Natural killer cell (primary cell): ENCODE measurements at regions of chr16 and their contacts with region 1.

Region 1: GRCh38 chr16:79601931-79602627 is 1.5 kb upstream of the MAF start:
- DNase-seq: peak; percentile 75 to 92
- ATAC-seq: no peak
- H3K4me3 ChIP-seq: peak overlapping the region; percentile 69
- H3K4me3 Mint-ChIP-seq: peak overlapping the region; percentile 99
- H3K27ac ChIP-seq: no peak overlapping the region
- H3K27ac Mint-ChIP-seq: peak overlapping the region; percentile 89 to 96
- H3K4me1 ChIP-seq: peaks cover 23% of the 10 kb centered on the region
- H3K4me1 Mint-ChIP-seq: peaks cover 27 to 31% of the 10 kb centered on the region in 2 donors
- H3K27me3 ChIP-seq: no peaks in the 10 kb centered on the region
- H3K27me3 Mint-ChIP-seq: peaks cover 0 to 19% of the 10 kb centered on the region in 2 donors
- CTCF ChIP-seq: peak; percentile 88

Region 2: DNA sequence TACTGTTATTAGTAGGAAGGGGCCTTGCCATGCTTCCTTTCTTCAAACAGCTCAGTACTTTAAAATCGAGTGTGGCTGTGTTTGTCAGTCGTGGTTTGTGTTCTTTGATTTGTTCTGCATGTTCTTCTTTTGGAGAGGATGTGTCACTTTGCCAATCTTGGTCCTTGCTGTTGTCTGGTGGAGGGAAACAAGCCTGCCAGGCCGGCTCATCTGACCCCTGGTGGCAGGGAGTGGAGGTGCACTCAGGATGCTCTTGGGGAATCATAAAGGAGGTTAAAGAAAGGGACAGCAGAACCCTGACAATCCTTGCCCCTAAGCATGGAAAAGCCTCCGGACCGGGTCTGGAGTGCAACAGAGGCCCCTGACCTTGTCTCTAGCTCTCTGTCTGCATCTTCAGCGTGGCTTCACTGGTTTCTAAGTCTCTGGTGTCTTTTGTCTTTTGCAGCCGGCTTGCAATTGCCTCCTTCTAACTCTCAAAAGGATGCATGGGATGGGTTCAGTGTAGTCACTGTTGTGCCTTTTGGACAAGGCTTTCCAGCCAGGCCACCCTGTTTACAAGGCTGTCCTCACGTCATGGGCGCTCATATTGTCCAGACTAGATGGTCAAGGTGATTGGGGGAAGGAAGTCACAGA is 1366.8 kb before region 1 on chr16:
- intact Hi-C with region 1: loop called (anchors 5 kb)
- DNase-seq: peak; percentile 66 to 74
- ATAC-seq: peak; percentile 84 to 88 (median 88)
- H3K4me3 ChIP-seq: no peak overlapping the region
- H3K4me3 Mint-ChIP-seq: no peak overlapping the region
- H3K27ac ChIP-seq: no peak overlapping the region
- H3K27ac Mint-ChIP-seq: no peak overlapping the region
- H3K4me1 ChIP-seq: no peaks in the 10 kb centered on the region
- H3K4me1 Mint-ChIP-seq: peaks cover 6% of the 10 kb centered on the region in 2 donors
- H3K27me3 ChIP-seq: no peaks in the 10 kb centered on the region
- H3K27me3 Mint-ChIP-seq: no peaks in the 10 kb centered on the region
- CTCF ChIP-seq: peak; percentile 93

Region 3: GRCh38 chr16:78705694-78706093 is 896.4 kb before region 1 on chr16:
- intact Hi-C with region 1: loop called (anchors 5 kb)
- DNase-seq: peak in 1 of 2 donors; percentile 67
- ATAC-seq: peak; percentile 49 to 53 (median 52)
- H3K4me3 ChIP-seq: no peak overlapping the region
- H3K4me3 Mint-ChIP-seq: no peak overlapping the region
- H3K27ac ChIP-seq: no peak overlapping the region
- H3K27ac Mint-ChIP-seq: no peak overlapping the region
- H3K4me1 ChIP-seq: no peaks in the 10 kb centered on the region
- H3K4me1 Mint-ChIP-seq: peaks cover 5 to 8% of the 10 kb centered on the region in 2 donors
- H3K27me3 ChIP-seq: no peaks in the 10 kb centered on the region
- H3K27me3 Mint-ChIP-seq: peaks cover 3 to 10% of the 10 kb centered on the region in 2 donors
- CTCF ChIP-seq: peak; percentile 59

Region 4: GRCh38 chr16:79089735-79090284 is 512.3 kb before region 1 on chr16:
- intact Hi-C with region 1: loop called (anchors 1 kb)
- DNase-seq: peak; percentile 40 to 70
- ATAC-seq: peak; percentile 42 to 64 (median 53)
- H3K4me3 ChIP-seq: peak overlapping the region; percentile 0
- H3K4me3 Mint-ChIP-seq: peak overlapping the region; percentile 88
- H3K27ac ChIP-seq: peak overlapping the region; percentile 2
- H3K27ac Mint-ChIP-seq: peak overlapping the region; percentile 81 to 87
- H3K4me1 ChIP-seq: peaks cover 60% of the 10 kb centered on the region
- H3K4me1 Mint-ChIP-seq: peaks cover 72 to 85% of the 10 kb centered on the region in 2 donors
- H3K27me3 ChIP-seq: no peaks in the 10 kb centered on the region
- H3K27me3 Mint-ChIP-seq: no peaks in the 10 kb centered on the region
- CTCF ChIP-seq: no peak

Region 5: GRCh38 chr16:79278506-79278905 is 323.6 kb before region 1 on chr16:
- intact Hi-C with region 1: loop called (anchors 5 kb)
- DNase-seq: peak; percentile 34 to 84
- ATAC-seq: peak; percentile 79 to 96 (median 91)
- H3K4me3 ChIP-seq: peak overlapping the region; percentile 5
- H3K4me3 Mint-ChIP-seq: peak overlapping the region; percentile 86
- H3K27ac ChIP-seq: peak overlapping the region; percentile 68
- H3K27ac Mint-ChIP-seq: peak overlapping the region; percentile 89 to 90
- H3K4me1 ChIP-seq: peaks cover 24% of the 10 kb centered on the region
- H3K4me1 Mint-ChIP-seq: peaks cover 47 to 51% of the 10 kb centered on the region in 2 donors
- H3K27me3 ChIP-seq: no peaks in the 10 kb centered on the region
- H3K27me3 Mint-ChIP-seq: no peaks in the 10 kb centered on the region
- CTCF ChIP-seq: no peak